ENCODE measurements at regions of chr2 and their contacts with region 1.

Region 1: GRCh38 chr2:84022810-84023431 is 436.2 kb downstream of the SUCLG1 start:
- DNase-seq: no peak
- H3K4me3 Mint-ChIP-seq: no peak overlapping the region
- H3K27ac Mint-ChIP-seq: no peak overlapping the region
- H3K4me1 Mint-ChIP-seq: no peaks in the 10 kb centered on the region
- H3K27me3 Mint-ChIP-seq: peaks cover 2% of the 10 kb centered on the region

Region 2: DNA sequence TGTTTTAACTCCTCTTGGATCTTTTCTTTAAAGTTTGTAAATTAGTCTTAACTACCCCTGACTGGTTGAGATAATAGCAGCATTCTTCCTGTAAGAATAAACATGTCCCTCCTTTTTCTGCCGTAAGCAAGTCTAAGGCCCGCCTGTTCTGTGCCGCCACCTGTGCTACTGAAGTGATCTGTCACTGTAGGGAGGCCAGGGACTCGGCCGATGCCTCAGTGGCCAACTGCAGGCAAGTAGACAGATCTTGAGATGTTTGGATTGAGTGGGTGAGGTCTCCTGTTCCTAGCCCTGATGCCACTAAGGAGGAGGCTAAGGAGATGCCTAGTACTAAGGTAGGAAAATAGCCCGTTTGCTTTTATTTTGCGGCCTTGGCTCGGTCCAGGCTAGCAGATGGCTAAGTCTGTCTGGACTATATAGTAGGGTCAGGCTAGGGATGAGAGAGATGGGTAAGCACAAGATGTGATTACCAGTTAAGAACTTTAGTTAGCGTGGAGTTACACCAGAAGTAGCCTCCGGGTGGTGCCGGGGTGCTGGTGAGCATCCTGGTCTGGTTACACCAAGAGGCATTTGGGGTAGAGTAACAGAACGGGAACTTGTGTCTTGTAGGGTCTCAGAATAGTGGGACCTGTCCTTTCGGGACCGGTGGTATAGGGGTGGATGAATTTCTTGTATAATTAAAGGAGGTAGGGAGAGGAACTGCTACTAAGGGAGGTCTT is 148.1 kb before region 1 on chr2:
- CTCF ChIA-PET with region 1: no interaction called
- POLR2A ChIA-PET with region 1: no interaction called
- intact Hi-C with region 1: no loop called
- DNase-seq: no peak
- H3K4me3 Mint-ChIP-seq: no peak overlapping the region
- H3K27ac Mint-ChIP-seq: no peak overlapping the region
- H3K4me1 Mint-ChIP-seq: no peaks in the 10 kb centered on the region
- H3K27me3 Mint-ChIP-seq: no peaks in the 10 kb centered on the region

Region 3: DNA sequence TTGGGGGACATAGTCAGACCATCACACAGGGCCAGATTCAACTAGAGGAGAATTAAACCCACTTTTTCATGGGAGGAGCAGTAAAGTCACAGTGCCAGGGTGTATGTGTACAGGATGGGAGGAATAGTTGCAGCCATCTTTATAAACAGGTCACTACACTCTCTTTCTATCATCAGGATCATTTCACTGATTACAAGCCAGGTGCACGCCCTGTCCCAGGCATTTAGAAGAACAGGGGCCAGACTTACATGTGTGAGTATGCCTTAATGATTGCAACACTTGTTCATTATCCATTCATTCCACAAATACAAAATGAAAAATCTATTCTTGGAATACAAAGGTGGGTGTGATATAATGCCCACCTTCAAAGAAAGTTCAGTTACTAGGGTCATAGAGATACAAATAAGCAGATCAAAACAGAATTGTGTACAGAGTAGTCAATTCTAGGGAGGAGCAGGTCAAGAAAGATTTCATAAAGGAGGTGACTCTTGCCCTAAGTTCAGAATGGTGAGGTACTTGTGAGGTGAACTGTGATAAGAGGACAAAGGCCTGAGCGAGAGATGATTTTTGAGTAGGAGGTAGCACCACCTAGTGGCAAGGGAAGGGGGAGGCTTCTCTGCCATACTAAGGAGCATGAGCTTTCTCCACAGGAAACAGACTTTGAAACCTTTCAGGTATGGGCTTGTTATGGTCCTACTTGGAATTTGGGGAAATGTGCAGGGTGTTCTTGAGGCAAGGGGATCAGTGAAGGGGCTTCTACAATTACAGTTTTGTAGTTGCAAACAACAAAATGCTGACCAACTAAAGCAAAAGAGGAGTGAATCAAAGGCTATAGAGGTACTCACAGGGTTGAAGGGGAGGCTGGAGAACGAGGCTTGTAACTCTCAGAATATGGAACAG is 279.8 kb after region 1 on chr2:
- CTCF ChIA-PET with region 1: interaction called, 14 read pairs
- POLR2A ChIA-PET with region 1: no interaction called
- intact Hi-C with region 1: loop called (anchors 2 kb)
- DNase-seq: peak; percentile 49
- H3K4me3 Mint-ChIP-seq: no peak overlapping the region
- H3K27ac Mint-ChIP-seq: no peak overlapping the region
- H3K4me1 Mint-ChIP-seq: no peaks in the 10 kb centered on the region
- H3K27me3 Mint-ChIP-seq: peaks cover 5% of the 10 kb centered on the region

Measured in activated CD4-positive, alpha-beta memory T cell treated with anti-CD3 and anti-CD28 coated beads for 36 hours (primary cell).